ENCODE measurements at regions of chr16 and their contacts with region 1.

Region 1: GRCh38 chr16:85610508-85611332 is 2.4 kb upstream of the GSE1 start:
- DNase-seq: peak; percentile 89
- H3K4me3 ChIP-seq: peak overlapping the region; percentile 61 to 71 (median 66)
- H3K27ac ChIP-seq: peak overlapping the region; percentile 89 to 98 (median 94)
- H3K4me1 ChIP-seq: peaks cover 48 to 91% (median 71%) of the 10 kb centered on the region in 4 donors
- H3K27me3 ChIP-seq: no peaks in the 10 kb centered on the region
- CTCF ChIP-seq: peak; percentile 98 to 100 (median 99)
- EP300 ChIP-seq: no peak
- POLR2A ChIP-seq: no peak

Region 2: DNA sequence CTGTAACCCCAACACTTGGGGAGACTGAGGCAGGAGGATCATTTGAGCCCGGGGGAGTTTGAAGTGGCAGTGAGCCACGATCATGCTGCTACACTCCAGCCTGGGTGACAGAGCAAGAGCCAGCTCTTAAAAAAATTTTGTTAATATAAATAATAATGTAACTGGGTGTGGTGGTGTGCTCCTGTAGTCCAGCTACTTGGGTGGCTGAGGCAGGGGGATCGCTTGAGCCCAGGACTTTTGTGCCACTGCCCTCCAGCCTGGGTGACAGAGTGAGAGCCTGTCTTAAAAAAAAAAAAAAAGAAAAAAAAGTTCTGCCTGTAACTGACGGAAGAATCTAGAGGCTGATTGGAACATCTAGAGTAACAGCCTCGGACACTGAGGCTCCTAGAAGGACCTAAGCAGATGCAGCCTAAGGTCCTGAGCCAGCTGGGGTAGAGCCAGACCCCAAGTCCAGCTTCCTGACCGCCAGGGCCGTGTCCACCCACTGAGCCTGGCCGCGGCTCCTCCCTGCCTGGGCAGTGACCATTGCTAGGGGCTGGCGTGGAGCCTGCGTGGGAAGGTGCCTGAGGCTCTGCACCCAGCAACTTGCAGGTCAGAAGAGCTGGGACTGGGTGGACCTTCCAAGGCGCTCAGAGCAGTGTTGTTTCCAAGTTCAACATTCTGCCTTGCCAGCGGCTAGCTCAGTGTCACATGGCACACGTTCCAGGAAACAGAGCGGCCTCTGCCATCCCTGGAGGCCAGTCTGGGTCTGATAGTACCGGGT is 289.0 kb before region 1 on chr16:
- in situ Hi-C with region 1: no loop called
- intact Hi-C with region 1: loop called (anchors 10 kb)
- DNase-seq: peak; percentile 73
- H3K4me3 ChIP-seq: no peak overlapping the region
- H3K27ac ChIP-seq: peak overlapping the region; percentile 68 to 79 (median 74)
- H3K4me1 ChIP-seq: peaks cover 6 to 27% (median 20%) of the 10 kb centered on the region in 4 donors
- H3K27me3 ChIP-seq: no peaks in the 10 kb centered on the region
- CTCF ChIP-seq: no peak
- EP300 ChIP-seq: no peak
- POLR2A ChIP-seq: no peak

Region 3: DNA sequence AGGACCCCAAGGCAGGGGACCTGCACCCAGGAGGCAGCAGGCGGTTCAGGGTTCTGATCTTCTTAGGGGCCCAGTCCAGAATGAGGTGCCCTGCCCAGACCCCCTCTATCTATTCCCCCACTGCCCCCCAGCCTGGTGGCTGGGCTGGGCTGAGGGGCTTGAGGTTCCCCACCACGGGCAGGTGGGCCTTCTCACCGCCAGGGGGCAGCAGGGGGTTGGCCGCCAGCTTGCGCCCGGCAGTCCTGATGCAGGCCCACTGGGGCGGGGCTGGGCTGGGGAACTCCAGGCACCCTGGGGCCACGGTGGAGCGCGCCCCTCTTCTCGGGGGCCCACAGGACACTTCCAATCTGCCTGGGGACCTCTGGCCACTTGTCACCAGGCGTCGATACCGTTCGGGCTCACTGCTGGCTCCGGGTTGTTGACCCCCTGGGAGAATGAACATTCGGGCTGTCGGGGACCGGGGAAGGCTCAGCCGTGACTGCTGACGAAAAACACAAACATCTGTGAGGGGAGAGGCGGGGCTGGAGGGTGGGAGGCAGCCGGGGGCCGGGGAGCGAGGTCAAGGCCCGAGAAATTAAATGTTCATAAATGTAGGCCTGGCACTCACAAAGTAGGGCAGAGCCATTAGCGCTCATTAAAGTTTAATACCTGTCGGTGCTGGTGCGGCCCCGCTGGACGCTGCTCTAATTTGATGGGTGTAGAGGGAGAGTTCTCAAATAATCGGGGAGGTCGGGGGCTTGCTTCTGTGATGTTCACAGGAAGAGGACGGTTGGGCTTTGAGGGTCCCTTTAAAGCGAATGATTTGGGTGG is 216.8 kb before region 1 on chr16:
- in situ Hi-C with region 1: no loop called
- intact Hi-C with region 1: loop called (anchors 5 kb)
- DNase-seq: peak; percentile 73
- H3K4me3 ChIP-seq: no peak overlapping the region
- H3K27ac ChIP-seq: peak overlapping the region; percentile 57 to 85 (median 74)
- H3K4me1 ChIP-seq: peaks cover 25 to 53% (median 37%) of the 10 kb centered on the region in 4 donors
- H3K27me3 ChIP-seq: no peaks in the 10 kb centered on the region
- CTCF ChIP-seq: peak; percentile 86 to 94 (median 93)
- EP300 ChIP-seq: no peak
- POLR2A ChIP-seq: no peak

Region 4: DNA sequence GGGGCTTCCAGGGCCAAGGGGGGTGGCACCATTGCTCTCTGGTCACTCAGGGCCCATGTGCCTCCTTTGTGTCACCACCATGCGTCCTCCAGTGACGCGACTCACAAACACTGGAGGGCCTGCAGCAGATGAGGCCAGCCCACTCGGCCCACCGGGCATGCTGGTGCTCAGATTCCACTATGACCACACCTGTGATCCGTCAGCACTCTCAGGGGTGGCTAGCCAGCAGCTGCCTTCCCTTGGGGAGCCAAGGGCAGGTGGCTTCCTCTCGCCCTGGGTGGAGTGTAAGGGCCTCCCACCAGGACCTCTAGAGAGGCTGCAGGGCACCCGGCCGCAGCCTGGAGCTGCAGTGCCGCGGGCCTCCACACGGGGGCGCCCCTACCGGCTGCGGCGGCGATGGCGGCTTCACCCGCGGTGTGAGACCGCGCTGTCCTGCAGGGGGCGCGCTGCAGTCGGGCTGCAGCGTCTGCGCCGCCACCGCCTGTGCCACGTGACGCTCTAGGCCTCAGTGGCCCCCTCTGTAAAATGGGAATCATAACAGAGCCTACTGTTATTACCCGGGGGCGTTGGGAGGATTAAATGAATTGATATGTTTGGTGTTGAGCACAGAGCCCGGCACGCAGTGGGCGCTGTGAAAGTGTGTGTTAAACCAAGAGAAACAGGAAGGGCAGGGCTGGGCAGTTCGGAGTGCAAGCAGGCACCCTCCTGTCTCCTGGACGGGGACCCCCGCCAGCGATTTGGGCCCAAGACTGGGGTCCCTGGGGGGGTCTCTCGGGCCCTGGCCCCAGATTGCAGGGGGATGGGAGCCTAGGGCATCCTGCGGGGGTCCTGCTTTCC is 190.0 kb before region 1 on chr16:
- in situ Hi-C with region 1: loop called in 3 of 4 experiments (anchors 10 to 25 kb)
- intact Hi-C with region 1: loop called (anchors 10 kb)
- DNase-seq: peak; percentile 75
- H3K4me3 ChIP-seq: no peak overlapping the region
- H3K27ac ChIP-seq: peak overlapping the region in 3 of 4 donors; percentile 43 to 74 (median 52)
- H3K4me1 ChIP-seq: peaks cover 13 to 45% (median 36%) of the 10 kb centered on the region in 4 donors
- H3K27me3 ChIP-seq: no peaks in the 10 kb centered on the region
- CTCF ChIP-seq: peak; percentile 97 to 100 (median 100)
- EP300 ChIP-seq: no peak
- POLR2A ChIP-seq: no peak

Region 5: GRCh38 chr16:85428168-85428898 is 182.4 kb before region 1 on chr16:
- in situ Hi-C with region 1: loop called in 2 of 4 experiments (anchors 25 kb)
- intact Hi-C with region 1: loop called (anchors 10 kb)
- DNase-seq: peak; percentile 62
- H3K4me3 ChIP-seq: no peak overlapping the region
- H3K27ac ChIP-seq: no peak overlapping the region
- H3K4me1 ChIP-seq: peaks cover 0 to 12% (median 5%) of the 10 kb centered on the region in 4 donors
- H3K27me3 ChIP-seq: no peaks in the 10 kb centered on the region
- CTCF ChIP-seq: peak; percentile 44 to 63 (median 53)
- EP300 ChIP-seq: no peak
- POLR2A ChIP-seq: no peak

Region 6: GRCh38 chr16:85554112-85554813 is 56.5 kb before region 1 on chr16:
- in situ Hi-C with region 1: loop called in 1 of 4 experiments (anchors 10 kb)
- intact Hi-C with region 1: loop called (anchors 5 kb)
- DNase-seq: peak; percentile 83
- H3K4me3 ChIP-seq: peak overlapping the region; percentile 64 to 95 (median 94)
- H3K27ac ChIP-seq: peak overlapping the region; percentile 91 to 98 (median 96)
- H3K4me1 ChIP-seq: peaks cover 6 to 52% (median 38%) of the 10 kb centered on the region in 4 donors
- H3K27me3 ChIP-seq: no peaks in the 10 kb centered on the region
- CTCF ChIP-seq: no peak
- EP300 ChIP-seq: no peak
- POLR2A ChIP-seq: peak; percentile 21